ENCODE measurements at regions of chr12 and their contacts with region 1.

Region 1: DNA sequence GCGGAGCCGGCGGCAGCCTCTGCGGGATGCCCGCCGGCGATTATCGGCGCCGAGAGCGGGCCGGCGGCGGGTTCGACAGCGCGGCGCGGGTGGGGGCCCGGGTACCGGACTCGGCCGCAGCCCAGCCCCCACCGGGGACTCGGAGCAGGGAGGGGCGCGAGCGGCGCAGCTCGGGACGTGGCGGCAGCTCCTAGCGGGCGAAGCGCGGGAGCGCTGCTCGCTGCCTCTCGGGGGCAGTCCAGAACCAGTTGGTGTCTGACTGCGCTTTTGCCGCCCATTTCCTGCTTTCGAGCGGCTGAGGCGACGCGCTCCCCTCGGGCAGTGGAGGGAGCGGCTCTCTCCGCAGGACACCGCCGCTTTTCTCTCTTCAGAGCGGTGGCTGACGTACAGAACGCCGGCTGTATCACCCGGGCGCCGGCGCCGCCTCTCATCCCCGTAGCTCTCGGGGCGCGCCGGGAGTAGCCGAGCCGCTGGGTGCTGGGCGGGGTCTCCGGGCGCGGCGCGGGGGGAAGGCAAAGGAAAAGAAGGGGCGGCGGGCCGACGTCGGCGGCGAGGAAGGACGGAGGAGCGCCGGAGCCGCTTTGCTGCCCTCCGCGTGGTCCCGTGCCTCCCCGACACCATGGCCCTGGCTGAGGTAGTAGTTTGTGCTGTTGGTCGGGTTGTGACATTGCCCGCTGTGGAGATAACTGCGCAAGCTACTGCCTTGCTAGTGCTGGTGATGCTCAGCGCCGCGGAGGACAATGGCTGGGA is 136.6 kb downstream of the MON2 start:
- DNase-seq: peak; percentile 94
- H3K4me3 Mint-ChIP-seq: peak overlapping the region; percentile 92
- H3K27ac Mint-ChIP-seq: peak overlapping the region; percentile 99
- H3K4me1 Mint-ChIP-seq: peaks cover 30% of the 10 kb centered on the region
- H3K27me3 Mint-ChIP-seq: no peaks in the 10 kb centered on the region

Region 2: GRCh38 chr12:62466594-62467491 is 136.4 kb before region 1 on chr12 and contains the start of gene MON2:
- intact Hi-C with region 1: loop called (anchors 1 kb)
- DNase-seq: peak; percentile 97
- H3K4me3 Mint-ChIP-seq: peak within 1 kb of the TSS; percentile 86
- H3K27ac Mint-ChIP-seq: peak within 1 kb of the TSS; percentile 93
- H3K4me1 Mint-ChIP-seq: peaks cover 19% of the 10 kb centered on the region
- H3K27me3 Mint-ChIP-seq: peaks cover 8% of the 10 kb centered on the region
- total RNA-seq, gene MON2: 32.8 and 36.4 TPM in 2 replicates

Region 3: DNA sequence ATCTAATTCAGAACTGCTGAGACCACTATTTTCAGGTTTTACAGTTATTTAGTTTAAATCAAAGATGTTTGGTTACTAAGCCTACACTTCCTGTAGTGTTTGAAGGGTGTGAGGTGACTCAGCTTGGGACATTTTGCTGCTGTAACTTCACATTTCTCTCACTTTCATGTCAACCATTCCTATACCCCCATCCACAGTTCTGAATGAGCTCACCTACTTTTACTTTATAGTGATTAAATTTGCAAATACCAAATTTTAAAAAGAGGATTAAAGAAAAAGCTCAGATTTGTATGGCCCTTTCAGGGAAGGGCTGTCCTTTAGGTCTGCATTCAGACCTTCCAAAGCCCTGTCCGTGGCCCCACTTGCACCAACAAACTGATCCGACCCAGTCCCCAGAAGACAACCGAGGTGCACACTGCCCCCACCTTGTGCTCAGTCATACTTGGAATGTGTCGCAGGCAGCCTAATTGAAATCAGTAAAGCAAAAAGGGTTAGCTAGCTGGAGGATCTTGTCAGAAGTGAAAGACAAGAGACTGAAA is 37.7 kb after region 1 on chr12:
- intact Hi-C with region 1: loop called (anchors 1 kb)
- DNase-seq: peak; percentile 70
- H3K4me3 Mint-ChIP-seq: peak overlapping the region; percentile 24
- H3K27ac Mint-ChIP-seq: peak overlapping the region; percentile 83
- H3K4me1 Mint-ChIP-seq: peaks cover 10% of the 10 kb centered on the region
- H3K27me3 Mint-ChIP-seq: peaks cover 15% of the 10 kb centered on the region

Region 4: DNA sequence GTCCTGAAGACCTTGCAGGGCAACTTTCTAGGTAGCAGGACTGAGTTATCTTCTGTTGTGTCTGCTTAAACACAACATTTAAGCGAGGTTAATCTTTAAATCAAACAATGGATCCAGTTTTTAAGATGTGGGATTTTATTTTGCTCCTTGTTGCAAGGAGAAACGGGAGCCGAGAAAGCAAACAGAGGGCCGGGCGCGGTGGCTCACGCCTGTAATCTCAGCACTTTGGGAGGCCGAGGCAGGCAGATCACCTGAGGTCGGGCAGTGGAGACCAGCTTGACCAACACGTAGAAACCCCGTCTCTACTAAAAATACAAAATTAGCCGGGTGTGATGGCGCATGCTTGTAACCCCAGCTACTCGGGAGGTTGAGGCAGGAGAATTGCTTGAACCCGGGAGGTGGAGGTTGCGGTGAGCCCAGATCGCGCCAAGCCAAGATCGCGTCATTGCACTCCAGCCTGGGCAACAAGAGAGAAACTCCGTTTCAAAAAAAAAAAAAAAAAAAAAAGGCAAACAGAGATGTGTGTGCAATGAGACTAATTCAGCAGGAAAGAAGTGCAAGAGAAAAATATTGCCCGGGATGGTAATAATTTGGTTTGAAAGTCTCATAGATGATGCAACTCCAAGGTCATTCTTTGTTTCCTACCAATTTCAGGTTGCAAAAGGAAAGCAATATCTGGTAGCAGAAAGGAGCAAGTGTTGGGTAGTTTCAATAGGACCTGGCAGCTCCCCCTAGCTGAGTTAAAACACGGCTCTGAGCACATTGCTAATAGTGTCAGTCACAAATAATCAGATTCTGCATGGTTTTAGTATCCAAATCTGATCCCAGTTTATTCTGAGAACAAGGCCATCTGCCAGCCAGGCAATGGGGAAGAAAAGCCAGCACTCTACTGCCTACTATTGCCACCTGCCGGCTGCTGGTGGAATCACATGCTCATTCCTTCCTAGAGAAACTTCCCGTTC is 190.3 kb after region 1 on chr12:
- intact Hi-C with region 1: loop called (anchors 5 kb)
- DNase-seq: peak; percentile 91
- H3K4me3 Mint-ChIP-seq: no peak overlapping the region
- H3K27ac Mint-ChIP-seq: no peak overlapping the region
- H3K4me1 Mint-ChIP-seq: no peaks in the 10 kb centered on the region
- H3K27me3 Mint-ChIP-seq: peaks cover 26% of the 10 kb centered on the region

Measured in activated CD4-positive, alpha-beta T cell treated with anti-CD3 and anti-CD28 coated beads, Interleukin-2, amount 10 ng/mL, durations not matched to agents 24 days and 14 days (primary cell).